Activated CD4-positive, alpha-beta T cell treated with anti-CD3 and anti-CD28 coated beads for 36 hours (primary cell): ENCODE measurements at regions of chr11 and their contacts with region 1.

Region 1: DNA sequence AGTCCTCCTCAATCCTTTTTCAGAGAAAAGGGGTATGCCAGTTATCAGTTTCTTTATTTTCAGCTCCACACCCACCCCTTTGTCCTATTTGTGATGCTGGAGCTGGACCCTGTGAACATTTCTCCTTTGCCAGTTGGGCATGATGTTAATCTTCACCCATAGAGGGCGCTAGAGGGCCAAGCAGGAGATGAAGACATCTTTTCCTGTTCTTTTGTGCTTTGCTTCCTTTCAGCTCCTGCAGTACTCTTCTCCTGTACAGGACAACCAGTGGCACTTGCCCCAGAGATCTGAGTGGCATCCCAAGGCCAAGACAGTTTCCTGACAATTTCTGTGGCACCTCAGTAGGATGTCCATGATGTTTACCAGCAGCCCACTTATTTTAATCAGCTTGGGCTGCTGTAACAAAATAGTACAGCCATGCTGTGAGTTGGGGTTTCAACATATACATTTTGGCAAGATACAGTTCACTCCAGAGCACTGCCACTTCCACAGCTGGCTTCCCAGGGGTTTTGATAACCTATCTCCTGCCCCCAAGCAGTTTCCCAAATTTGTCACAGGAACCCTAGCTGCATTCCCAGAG is 4.6 kb downstream of the SAA2 start:
- DNase-seq: peak; percentile 77
- ATAC-seq: no peak
- H3K4me3 Mint-ChIP-seq: no peak overlapping the region
- H3K27ac Mint-ChIP-seq: no peak overlapping the region
- H3K4me1 Mint-ChIP-seq: peaks cover 11% of the 10 kb centered on the region
- H3K27me3 Mint-ChIP-seq: peaks cover 7% of the 10 kb centered on the region

Region 2: GRCh38 chr11:18265949-18266348 is 22.1 kb after region 1 on chr11 and contains the start of gene SAA1:
- CTCF ChIA-PET with region 1: interaction called, 7 read pairs
- POLR2A ChIA-PET with region 1: no interaction called
- intact Hi-C with region 1: loop called (anchors 1 to 2 kb)
- DNase-seq: no peak
- ATAC-seq: no peak
- H3K4me3 Mint-ChIP-seq: no peak within 1 kb of the TSS
- H3K27ac Mint-ChIP-seq: no peak within 1 kb of the TSS
- H3K4me1 Mint-ChIP-seq: peaks cover 3% of the 10 kb centered on the region
- H3K27me3 Mint-ChIP-seq: no peaks in the 10 kb centered on the region
- total RNA-seq, gene SAA1: not detected

Region 3: DNA sequence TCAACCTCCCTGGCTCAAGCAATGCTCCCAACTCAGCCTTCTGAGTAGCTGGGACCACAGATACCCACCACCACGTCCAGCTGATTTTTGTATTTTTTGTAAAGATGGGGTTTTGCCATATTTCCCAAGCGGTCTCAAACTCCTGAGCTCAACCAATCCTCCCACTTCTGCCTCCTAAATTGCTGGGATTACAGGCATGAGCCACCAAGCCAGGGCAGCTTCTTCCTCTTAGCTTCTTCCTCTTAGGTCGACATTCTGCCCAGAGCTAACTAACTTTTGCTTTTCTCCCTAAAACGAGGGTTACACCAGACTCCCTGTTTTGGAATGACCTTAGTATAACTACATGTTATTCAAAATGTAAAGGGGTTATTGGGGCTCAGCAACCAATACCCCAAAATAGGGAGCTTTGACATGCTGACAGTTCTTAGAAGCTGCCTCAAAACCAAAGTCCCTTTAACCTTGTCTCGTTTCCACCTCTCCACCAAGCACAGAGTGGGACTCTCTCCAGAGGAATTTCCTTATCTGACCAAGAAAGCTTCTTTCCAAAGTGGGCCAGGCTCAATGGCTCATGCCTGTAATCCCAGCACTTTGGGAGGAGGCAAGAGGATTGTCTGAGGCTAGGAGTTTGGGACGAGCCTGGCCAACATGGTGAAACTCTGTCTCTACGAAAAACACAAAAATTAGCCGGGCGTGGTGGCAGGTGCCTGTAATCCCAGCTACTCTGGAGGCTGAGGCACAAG is 71.1 kb after region 1 on chr11:
- CTCF ChIA-PET with region 1: interaction called, 23 read pairs
- POLR2A ChIA-PET with region 1: no interaction called
- intact Hi-C with region 1: no loop called
- DNase-seq: no peak
- ATAC-seq: no peak
- H3K4me3 Mint-ChIP-seq: no peak overlapping the region
- H3K27ac Mint-ChIP-seq: no peak overlapping the region
- H3K4me1 Mint-ChIP-seq: peaks cover 26% of the 10 kb centered on the region
- H3K27me3 Mint-ChIP-seq: no peaks in the 10 kb centered on the region

Region 4: DNA sequence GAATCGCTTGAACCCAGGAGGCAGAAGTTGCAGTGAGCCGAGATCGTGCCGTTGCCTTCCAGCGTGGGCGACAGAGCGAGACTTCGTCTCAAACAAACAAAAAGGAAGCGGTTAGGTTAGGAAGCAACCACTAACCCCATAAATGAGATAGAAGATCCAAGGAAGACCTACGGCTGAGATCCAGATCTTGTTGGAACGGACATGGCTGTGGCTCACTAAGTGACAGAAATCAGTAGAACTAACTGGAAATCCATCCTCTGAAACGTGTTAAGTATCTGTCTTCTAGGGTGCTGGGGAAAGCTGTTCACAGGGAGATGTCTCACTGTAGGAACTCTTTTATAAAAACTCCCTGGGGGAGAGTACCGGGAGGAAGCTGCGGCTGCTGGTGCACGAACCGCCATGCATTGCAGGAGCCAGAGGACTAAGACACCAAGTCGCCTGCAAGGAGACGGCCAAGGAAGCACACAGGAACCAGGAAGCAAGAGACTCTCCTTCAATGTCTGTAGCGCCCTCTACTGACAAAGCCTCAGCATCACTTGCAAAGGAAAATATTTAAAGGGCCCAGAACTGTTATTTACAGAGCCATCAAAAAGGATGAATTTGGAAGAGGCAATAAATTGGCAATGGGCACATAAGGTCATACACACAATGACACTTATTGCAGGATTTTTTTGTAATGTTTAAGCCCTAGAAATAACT is 407.1 kb after region 1 on chr11:
- CTCF ChIA-PET with region 1: interaction called, 7 read pairs
- POLR2A ChIA-PET with region 1: no interaction called
- intact Hi-C with region 1: loop called (anchors 1 to 5 kb)
- DNase-seq: peak; percentile 66
- ATAC-seq: peak; percentile 74
- H3K4me3 Mint-ChIP-seq: no peak overlapping the region
- H3K27ac Mint-ChIP-seq: no peak overlapping the region
- H3K4me1 Mint-ChIP-seq: no peaks in the 10 kb centered on the region
- H3K27me3 Mint-ChIP-seq: no peaks in the 10 kb centered on the region

Region 5: DNA sequence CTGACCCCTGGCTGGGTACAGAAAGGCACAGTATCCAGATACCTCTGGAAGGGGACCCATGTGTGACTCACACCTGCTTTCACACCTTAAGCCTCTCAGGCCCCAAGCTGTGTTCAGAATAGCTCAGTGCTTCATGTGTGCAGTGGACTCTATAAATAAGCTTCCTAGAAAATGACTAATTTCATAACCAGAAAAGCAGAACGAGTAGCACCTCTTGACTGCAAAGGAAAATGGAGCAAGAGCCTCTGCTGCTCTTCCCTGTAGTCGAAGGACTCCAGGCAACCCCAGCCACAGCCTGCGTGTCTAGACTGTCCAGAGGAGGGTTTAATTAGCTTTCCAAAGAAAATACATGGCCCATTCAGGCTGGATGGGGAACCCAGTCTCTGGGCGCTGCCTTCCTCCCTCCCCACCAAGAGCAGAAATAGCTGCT is 524.6 kb after region 1 on chr11:
- CTCF ChIA-PET with region 1: interaction called, 6 read pairs
- POLR2A ChIA-PET with region 1: no interaction called
- intact Hi-C with region 1: loop called in 1 of 2 experiments (anchors 1 kb)
- DNase-seq: no peak
- ATAC-seq: peak; percentile 63
- H3K4me3 Mint-ChIP-seq: no peak overlapping the region
- H3K27ac Mint-ChIP-seq: no peak overlapping the region
- H3K4me1 Mint-ChIP-seq: peaks cover 11% of the 10 kb centered on the region
- H3K27me3 Mint-ChIP-seq: peaks cover 19% of the 10 kb centered on the region

Region 6: GRCh38 chr11:18865951-18866350 is 622.1 kb after region 1 on chr11:
- CTCF ChIA-PET with region 1: no interaction called
- POLR2A ChIA-PET with region 1: no interaction called
- intact Hi-C with region 1: no loop called
- DNase-seq: no peak
- ATAC-seq: no peak
- H3K4me3 Mint-ChIP-seq: no peak overlapping the region
- H3K27ac Mint-ChIP-seq: no peak overlapping the region
- H3K4me1 Mint-ChIP-seq: no peaks in the 10 kb centered on the region
- H3K27me3 Mint-ChIP-seq: peaks cover 17% of the 10 kb centered on the region